ENCODE measurements at regions of chr2 and their contacts with region 1.

Region 1: DNA sequence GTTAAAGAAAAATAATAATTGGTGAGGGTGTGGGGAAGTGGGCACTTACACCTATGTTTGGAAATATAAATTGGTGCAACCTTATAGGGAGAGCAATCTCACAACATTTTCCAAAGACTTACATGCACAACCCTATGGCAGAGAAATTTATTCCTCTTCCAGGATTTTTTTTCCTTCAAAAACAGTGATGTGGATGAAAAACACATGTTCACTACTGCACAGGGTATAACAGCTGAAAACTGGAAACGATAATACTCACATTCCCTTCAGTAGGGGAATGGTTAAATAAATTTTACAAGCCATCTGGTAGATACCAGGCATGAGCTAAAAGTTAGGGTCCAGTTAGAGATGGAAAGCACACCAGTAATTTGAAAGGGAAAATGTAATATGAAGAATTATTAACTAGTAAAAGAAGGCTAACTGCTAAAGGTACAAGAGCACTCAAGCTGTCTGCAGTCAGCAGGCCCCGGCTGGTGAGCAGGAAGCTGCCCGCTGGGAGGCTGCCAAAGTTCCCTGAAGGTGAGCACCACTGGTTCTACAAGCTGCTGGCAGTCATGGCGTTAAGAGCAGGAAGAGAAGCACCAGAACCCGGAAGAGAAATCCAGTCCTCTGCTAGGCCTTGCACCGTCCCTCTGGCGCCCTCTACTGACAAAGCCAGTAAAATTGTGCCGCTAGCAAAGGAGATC is 28.4 kb upstream of the CASP8 start:
- DNase-seq: peak; percentile 79 to 93
- ATAC-seq: peak; percentile 69 to 92 (median 90)
- H3K4me3 ChIP-seq: peak overlapping the region in 5 of 10 donors; percentile 15 to 28 (median 20)
- H3K27ac ChIP-seq: peak overlapping the region in 8 of 10 donors; percentile 22 to 87 (median 46)
- H3K4me1 ChIP-seq: peaks cover 0 to 70% (median 24%) of the 10 kb centered on the region in 9 donors
- H3K27me3 ChIP-seq: no peaks in the 10 kb centered on the region
- CTCF ChIP-seq: peak; percentile 81 to 94 (median 90)

Region 2: DNA sequence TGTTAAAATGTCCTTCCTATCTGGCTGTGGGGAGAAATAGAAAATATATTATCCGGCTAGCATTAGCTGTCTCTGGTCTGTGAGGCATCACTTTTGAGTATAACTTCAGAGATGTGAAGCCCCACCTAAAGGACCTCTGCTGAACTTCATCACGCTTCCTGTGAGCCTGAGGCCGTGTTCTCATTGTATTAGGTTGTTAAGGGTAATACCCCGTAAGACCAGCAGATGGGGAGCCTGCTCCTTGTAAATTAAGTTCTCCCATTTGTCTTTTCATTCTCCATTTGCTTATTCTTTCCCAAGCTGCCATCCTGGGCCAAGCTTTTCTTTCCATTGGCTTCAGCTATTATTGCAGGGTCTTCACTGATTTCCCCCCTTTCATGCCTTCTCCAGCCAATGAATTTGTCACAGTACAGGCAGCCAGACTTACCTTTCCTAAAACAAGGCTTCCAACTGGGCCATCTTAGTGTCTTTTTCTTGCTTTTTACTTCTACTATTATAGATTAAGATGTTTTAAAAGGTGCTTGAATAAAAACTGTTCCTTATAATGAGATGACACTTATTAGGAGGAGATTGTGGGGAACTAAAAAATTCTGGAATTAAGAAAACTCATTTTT is 330.4 kb before region 1 on chr2:
- intact Hi-C with region 1: loop called in 3 of 10 experiments (anchors 5 to 10 kb)
- DNase-seq: peak in 1 of 2 donors; percentile 66
- ATAC-seq: peak; percentile 77 to 88 (median 82)
- H3K4me3 ChIP-seq: no peak overlapping the region
- H3K27ac ChIP-seq: peak overlapping the region in 3 of 10 donors; percentile 6 to 51 (median 19)
- H3K4me1 ChIP-seq: peaks cover 0 to 18% (median 5%) of the 10 kb centered on the region in 9 donors
- H3K27me3 ChIP-seq: no peaks in the 10 kb centered on the region
- CTCF ChIP-seq: peak; percentile 51 to 86 (median 76)

Region 3: DNA sequence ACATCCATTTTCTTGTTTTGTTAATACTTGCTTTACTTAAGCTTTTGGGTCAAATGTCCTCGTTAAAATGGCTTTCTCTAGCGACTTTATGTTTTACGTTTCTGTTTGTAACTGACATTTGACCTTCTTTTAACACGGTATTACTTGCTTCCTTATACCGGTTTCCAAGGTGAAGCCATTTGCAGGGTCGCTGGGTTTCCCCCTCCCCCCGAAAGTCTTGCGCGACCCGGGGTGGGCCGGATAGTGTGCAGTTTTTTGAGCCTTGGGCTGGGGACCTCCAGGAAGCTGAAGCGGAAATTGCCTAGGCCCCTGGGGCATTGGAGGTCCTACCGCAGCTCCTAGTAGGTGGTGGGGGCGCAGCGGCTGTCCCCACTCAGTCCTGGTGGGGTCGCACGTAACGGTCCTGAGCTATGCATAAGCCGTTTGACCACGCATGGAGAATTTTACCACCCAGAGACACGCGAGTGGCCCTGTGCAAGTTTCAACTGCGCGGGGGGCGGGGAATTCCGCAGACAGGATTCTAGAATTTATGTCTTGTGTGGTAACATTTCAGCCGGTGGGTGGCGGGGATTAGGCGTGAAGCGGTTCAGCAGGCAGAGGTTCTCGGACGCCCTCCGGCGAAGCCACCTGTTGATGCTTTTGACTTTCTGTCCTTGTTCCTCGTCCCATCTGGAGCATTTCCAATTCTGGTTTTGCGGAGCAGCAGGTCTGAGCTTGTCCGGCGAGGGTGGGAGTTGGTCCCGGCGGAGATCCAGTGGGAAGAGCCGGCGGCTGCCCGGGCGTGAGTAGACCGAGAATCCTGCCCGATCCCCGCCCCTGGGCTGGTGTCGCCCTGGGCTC is 113.6 kb before region 1 on chr2:
- intact Hi-C with region 1: loop called in 1 of 10 experiments (anchors 1 kb)
- DNase-seq: peak; percentile 86 to 92
- ATAC-seq: peak; percentile 49 to 75 (median 66)
- H3K4me3 ChIP-seq: peak overlapping the region; percentile 73 to 96 (median 84)
- H3K27ac ChIP-seq: peak overlapping the region; percentile 98 to 100 (median 100)
- H3K4me1 ChIP-seq: peaks cover 3 to 59% (median 50%) of the 10 kb centered on the region in 9 donors
- H3K27me3 ChIP-seq: no peaks in the 10 kb centered on the region
- CTCF ChIP-seq: peak; percentile 26 to 70 (median 52)

Region 4: GRCh38 chr2:201182650-201183364 is 49.1 kb before region 1 on chr2 and contains the start of gene CASP10:
- intact Hi-C with region 1: loop called in 8 of 10 experiments (anchors 1 to 5 kb)
- DNase-seq: no peak
- ATAC-seq: peak in 7 of 8 donors; percentile 77 to 88 (median 79)
- H3K4me3 ChIP-seq: peak within 1 kb of the TSS; percentile 19 to 64 (median 62)
- H3K27ac ChIP-seq: peak within 1 kb of the TSS; percentile 23 to 89 (median 76)
- H3K4me1 ChIP-seq: peaks cover 0 to 43% (median 14%) of the 10 kb centered on the region in 9 donors
- H3K27me3 ChIP-seq: no peaks in the 10 kb centered on the region
- CTCF ChIP-seq: peak in 8 of 9 donors; percentile 18 to 71 (median 54)
- total RNA-seq, gene CASP10: 4.6 to 13.2 (median 5.6) TPM

Region 5: GRCh38 chr2:201363857-201364560 is 132.1 kb after region 1 on chr2:
- intact Hi-C with region 1: loop called in 7 of 10 experiments (anchors 2 to 5 kb)
- DNase-seq: no peak
- ATAC-seq: peak; percentile 44 to 77 (median 68)
- H3K4me3 ChIP-seq: no peak overlapping the region
- H3K27ac ChIP-seq: peak overlapping the region in 1 of 10 donors; percentile 1
- H3K4me1 ChIP-seq: peaks cover 0 to 13% (median 3%) of the 10 kb centered on the region in 9 donors
- H3K27me3 ChIP-seq: no peaks in the 10 kb centered on the region
- CTCF ChIP-seq: peak; percentile 58 to 87 (median 78)

Region 6: GRCh38 chr2:201451292-201452057 is 219.6 kb after region 1 on chr2 and contains the starts of genes STRADB and TRAK2:
- intact Hi-C with region 1: loop called in 2 of 10 experiments (anchors 10 kb)
- DNase-seq: peak; percentile 95 to 97
- ATAC-seq: peak; percentile 98 to 99 (median 98)
- H3K4me3 ChIP-seq: peak within 1 kb of the TSS; percentile 73 to 90 (median 84)
- H3K27ac ChIP-seq: peak within 1 kb of the TSS; percentile 90 to 95 (median 94)
- H3K4me1 ChIP-seq: peaks cover under 1 to 61% (median 50%) of the 10 kb centered on the region in 9 donors
- H3K27me3 ChIP-seq: no peaks in the 10 kb centered on the region
- CTCF ChIP-seq: peak in 6 of 9 donors; percentile 9 to 61 (median 43)
- total RNA-seq, gene STRADB: 43.1 to 77.6 (median 58.6) TPM
- total RNA-seq, gene TRAK2: 124 to 190 (median 169) TPM

Region 7: GRCh38 chr2:201621293-201621999 is 389.5 kb after region 1 on chr2:
- intact Hi-C with region 1: loop called in 4 of 10 experiments (anchors 10 kb)
- DNase-seq: no peak
- ATAC-seq: peak in 3 of 8 donors; percentile 47 to 58 (median 57)
- H3K4me3 ChIP-seq: no peak overlapping the region
- H3K27ac ChIP-seq: peak overlapping the region in 2 of 10 donors; percentile 14 to 34
- H3K4me1 ChIP-seq: peaks cover 0 to 10% (median 5%) of the 10 kb centered on the region in 9 donors
- H3K27me3 ChIP-seq: no peaks in the 10 kb centered on the region
- CTCF ChIP-seq: no peak